Activated naive CD4-positive, alpha-beta T cell treated with anti-CD3 and anti-CD28 coated beads for 36 hours (primary cell): ENCODE measurements at regions of chr18 and their contacts with region 1.

Region 1: DNA sequence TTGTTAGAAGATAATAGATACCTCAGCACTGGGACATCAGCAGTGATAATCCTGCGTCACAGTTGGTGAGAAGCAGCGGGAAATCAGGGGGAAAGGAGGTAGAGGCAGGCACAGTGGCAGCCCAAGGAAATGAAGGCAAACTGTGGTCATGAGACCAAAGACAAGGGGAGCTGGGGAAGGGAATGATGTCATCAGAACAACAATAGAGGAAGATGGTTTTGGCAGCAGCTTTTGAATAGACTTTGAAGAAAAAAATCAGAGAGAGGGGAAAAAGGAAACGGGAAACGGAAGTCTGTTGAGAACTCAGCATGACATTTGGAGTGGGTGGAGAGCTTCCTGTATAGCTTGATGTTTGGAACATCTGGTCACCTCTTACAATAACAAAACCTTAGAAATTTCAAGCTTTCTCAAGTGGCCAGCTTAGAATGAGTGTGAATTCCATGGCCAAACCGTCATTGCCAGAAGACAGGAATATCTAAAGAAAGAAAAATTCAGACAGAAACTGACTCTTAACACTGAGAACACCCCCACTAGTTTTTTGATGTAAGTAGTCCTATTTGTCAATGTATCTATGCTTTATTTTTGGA is 18.4 kb upstream of the YES1 start:
- DNase-seq: peak; percentile 42
- H3K4me3 Mint-ChIP-seq: peak overlapping the region; percentile 16
- H3K27ac Mint-ChIP-seq: peak overlapping the region; percentile 72
- H3K4me1 Mint-ChIP-seq: peaks cover 21% of the 10 kb centered on the region
- H3K27me3 Mint-ChIP-seq: no peaks in the 10 kb centered on the region

Region 2: DNA sequence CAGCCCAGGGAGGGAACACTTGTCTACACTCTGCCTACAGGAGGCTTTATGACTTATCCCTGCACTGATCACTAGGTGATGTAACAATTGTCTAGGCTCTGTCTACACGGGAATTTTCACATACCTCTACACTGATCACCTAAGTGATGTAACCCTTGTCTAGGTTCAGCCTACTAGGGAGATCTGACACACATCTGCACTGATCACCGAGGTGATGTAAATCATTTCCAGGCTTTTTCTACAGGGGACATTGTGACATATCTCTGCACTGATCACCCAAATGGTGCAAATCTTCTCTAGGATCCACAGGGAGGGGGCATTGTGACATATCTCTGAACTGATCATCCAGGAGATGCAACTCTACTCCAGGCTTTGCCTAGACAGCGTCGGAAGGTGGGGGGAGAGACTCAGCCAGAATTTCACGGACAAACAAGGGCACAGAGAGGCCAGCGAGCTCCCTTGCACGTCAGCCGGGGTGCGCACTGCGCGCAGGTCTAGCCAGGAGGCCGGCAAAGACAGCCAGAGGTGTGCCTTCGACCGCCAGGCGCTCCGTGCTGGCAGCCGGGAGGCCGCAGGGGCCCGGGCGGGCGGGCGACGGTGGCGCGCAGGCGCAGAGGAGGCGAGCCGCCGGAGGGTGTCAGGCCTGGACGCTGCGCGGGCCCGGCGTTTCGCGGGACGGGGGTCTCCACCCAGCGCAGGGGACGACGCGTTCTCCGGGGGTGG is 719.0 kb before region 1 on chr18:
- CTCF ChIA-PET with region 1: no interaction called
- intact Hi-C with region 1: loop called (anchors 2 kb)
- DNase-seq: peak; percentile 69
- H3K4me3 Mint-ChIP-seq: peak overlapping the region; percentile 84
- H3K27ac Mint-ChIP-seq: peak overlapping the region; percentile 96
- H3K4me1 Mint-ChIP-seq: peaks cover 16% of the 10 kb centered on the region
- H3K27me3 Mint-ChIP-seq: no peaks in the 10 kb centered on the region

Region 3: GRCh38 chr18:427005-427404 is 403.4 kb before region 1 on chr18:
- CTCF ChIA-PET with region 1: no interaction called
- intact Hi-C with region 1: no loop called
- DNase-seq: no peak
- H3K4me3 Mint-ChIP-seq: no peak overlapping the region
- H3K27ac Mint-ChIP-seq: no peak overlapping the region
- H3K4me1 Mint-ChIP-seq: no peaks in the 10 kb centered on the region
- H3K27me3 Mint-ChIP-seq: peaks cover 4% of the 10 kb centered on the region

Region 4: DNA sequence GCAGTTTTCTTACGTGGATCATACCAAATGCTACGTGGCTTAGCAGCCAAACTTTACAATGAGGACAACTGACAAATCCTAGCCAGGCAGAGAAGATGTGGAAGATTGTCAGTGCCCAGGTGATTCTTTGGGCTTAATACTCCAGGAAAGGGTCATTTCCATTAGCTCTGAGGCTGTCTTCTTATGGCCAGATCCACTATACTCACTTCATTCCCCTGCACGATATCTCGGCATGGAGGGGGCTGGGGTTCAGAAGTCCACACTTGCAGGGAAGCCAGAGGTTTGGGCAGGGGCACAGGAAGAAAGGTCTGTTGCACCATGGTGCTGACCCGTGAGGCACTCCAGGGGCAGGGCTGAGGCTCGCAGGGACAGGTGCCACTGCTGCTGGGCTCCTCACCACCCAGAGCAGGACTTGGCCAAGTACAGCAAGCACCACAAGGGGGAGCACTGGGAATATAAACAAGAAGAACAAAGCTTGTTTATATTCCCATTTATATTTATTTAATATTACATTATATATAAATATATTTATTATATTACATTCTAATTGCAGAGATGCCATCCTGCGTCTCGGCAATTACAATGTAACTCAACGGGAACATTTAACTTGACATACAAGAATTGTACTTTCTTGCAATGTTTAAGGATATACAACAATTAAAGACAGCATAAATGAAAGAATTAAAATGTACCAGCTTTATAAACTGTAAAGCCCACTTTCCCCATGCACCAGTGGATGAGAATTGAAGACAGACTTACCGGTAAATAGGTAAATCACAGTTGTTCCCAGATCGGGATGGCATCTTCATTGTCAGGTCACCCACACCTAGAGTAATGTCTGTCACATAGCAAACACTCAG is 206.4 kb before region 1 on chr18:
- CTCF ChIA-PET with region 1: interaction called, 43 read pairs
- intact Hi-C with region 1: loop called (anchors 1 kb)
- DNase-seq: peak; percentile 81
- H3K4me3 Mint-ChIP-seq: no peak overlapping the region
- H3K27ac Mint-ChIP-seq: no peak overlapping the region
- H3K4me1 Mint-ChIP-seq: no peaks in the 10 kb centered on the region
- H3K27me3 Mint-ChIP-seq: no peaks in the 10 kb centered on the region

Region 5: GRCh38 chr18:731185-731584 is 99.2 kb before region 1 on chr18:
- CTCF ChIA-PET with region 1: interaction called, 12 read pairs
- intact Hi-C with region 1: no loop called
- DNase-seq: no peak
- H3K4me3 Mint-ChIP-seq: no peak overlapping the region
- H3K27ac Mint-ChIP-seq: no peak overlapping the region
- H3K4me1 Mint-ChIP-seq: peaks cover 2% of the 10 kb centered on the region
- H3K27me3 Mint-ChIP-seq: no peaks in the 10 kb centered on the region

Region 6: GRCh38 chr18:754666-755065 is 75.7 kb before region 1 on chr18:
- CTCF ChIA-PET with region 1: interaction called, 19 read pairs
- intact Hi-C with region 1: no loop called
- DNase-seq: no peak
- H3K4me3 Mint-ChIP-seq: no peak overlapping the region
- H3K27ac Mint-ChIP-seq: no peak overlapping the region
- H3K4me1 Mint-ChIP-seq: no peaks in the 10 kb centered on the region
- H3K27me3 Mint-ChIP-seq: no peaks in the 10 kb centered on the region

Region 7: GRCh38 chr18:1488956-1489355 is 658.5 kb after region 1 on chr18:
- CTCF ChIA-PET with region 1: no interaction called
- intact Hi-C with region 1: no loop called
- DNase-seq: no peak
- H3K4me3 Mint-ChIP-seq: no peak overlapping the region
- H3K27ac Mint-ChIP-seq: no peak overlapping the region
- H3K4me1 Mint-ChIP-seq: no peaks in the 10 kb centered on the region
- H3K27me3 Mint-ChIP-seq: no peaks in the 10 kb centered on the region